Esophagus muscularis mucosa (tissue), 4 donors: ENCODE measurements at regions of chr7 and their contacts with region 1.

Region 1: DNA sequence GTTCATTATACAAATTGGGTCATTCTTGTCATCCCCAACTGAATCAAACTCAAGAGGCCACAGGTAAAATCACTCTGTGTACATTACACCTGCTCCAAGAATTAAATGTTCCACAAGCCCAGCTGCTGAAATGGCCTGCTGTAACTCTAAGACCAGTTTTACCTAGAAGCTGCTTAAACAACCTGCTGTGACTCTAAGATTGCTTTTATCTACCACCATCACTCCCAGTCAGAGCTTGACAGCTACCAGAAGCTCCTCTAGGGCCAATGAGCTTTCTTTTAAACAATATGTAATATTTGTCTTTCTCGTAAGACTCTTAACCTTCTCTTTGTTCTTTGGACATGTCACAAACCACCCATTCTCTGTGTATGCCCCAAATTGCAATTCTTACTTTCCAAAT is 141.8 kb upstream of the LRGUK start:
- DNase-seq: no peak
- H3K4me3 ChIP-seq: no peak overlapping the region
- H3K27ac ChIP-seq: no peak overlapping the region
- H3K4me1 ChIP-seq: no peaks in the 10 kb centered on the region
- H3K27me3 ChIP-seq: no peaks in the 10 kb centered on the region
- CTCF ChIP-seq: no peak
- EP300 ChIP-seq: no peak
- POLR2A ChIP-seq: no peak

Region 2: GRCh38 chr7:133936074-133936473 is 49.2 kb before region 1 on chr7:
- intact Hi-C with region 1: loop called (anchors 5 kb)
- DNase-seq: no peak
- H3K4me3 ChIP-seq: no peak overlapping the region
- H3K27ac ChIP-seq: no peak overlapping the region
- H3K4me1 ChIP-seq: peaks cover 0 to 13% (median 8%) of the 10 kb centered on the region in 4 donors
- H3K27me3 ChIP-seq: no peaks in the 10 kb centered on the region
- CTCF ChIP-seq: no peak
- EP300 ChIP-seq: no peak
- POLR2A ChIP-seq: no peak